ENCODE measurements at regions of chr18 and their contacts with region 1.

Region 1: DNA sequence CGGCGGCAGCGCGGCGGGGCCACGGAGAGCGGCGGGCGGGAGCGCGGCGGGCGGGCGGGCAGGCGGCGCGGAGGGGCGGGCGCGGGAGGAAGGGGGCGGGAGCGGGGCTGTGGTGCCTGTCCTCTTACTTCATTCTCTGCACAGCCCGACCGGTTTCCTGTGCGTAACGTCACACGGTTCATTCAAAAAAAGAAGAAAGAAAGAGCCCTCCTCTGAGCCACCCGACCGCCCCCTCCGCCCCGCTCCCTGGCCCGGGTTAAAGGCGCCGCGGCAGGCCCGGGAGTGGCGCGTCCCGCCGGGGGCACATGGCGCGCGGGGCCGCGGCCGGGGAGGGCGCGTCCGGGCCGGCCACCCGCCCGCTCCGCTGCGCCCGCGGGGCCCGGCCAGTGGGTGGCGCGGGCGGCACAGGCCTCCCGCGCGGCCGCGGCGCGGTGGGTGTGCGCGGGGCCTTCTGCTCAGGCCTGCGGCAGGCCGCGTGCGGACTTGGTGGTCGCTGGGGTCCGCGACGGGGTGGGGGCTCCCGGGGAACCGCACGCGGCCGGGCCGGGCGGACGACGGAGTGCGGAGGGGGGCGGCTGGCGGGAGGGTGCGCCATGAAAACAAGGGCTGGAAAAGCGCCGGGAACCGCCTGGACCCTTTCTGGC is 599 bp upstream of the BCL2 start:
- DNase-seq: peak; percentile 84
- H3K4me3 Mint-ChIP-seq: peak overlapping the region; percentile 80
- H3K27ac Mint-ChIP-seq: peak overlapping the region; percentile 86
- H3K4me1 Mint-ChIP-seq: peaks cover 27% of the 10 kb centered on the region
- H3K27me3 Mint-ChIP-seq: no peaks in the 10 kb centered on the region

Region 2: GRCh38 chr18:62714671-62715435 is 605.3 kb before region 1 on chr18:
- intact Hi-C with region 1: loop called (anchors 10 kb)
- DNase-seq: peak; percentile 90
- H3K4me3 Mint-ChIP-seq: peak overlapping the region; percentile 80
- H3K27ac Mint-ChIP-seq: peak overlapping the region; percentile 76
- H3K4me1 Mint-ChIP-seq: peaks cover 30% of the 10 kb centered on the region
- H3K27me3 Mint-ChIP-seq: peaks cover 12% of the 10 kb centered on the region

Region 3: GRCh38 chr18:63105636-63106316 is 214.4 kb before region 1 on chr18:
- intact Hi-C with region 1: loop called (anchors 2 kb)
- DNase-seq: no peak
- H3K4me3 Mint-ChIP-seq: no peak overlapping the region
- H3K27ac Mint-ChIP-seq: no peak overlapping the region
- H3K4me1 Mint-ChIP-seq: peaks cover 61% of the 10 kb centered on the region
- H3K27me3 Mint-ChIP-seq: peaks cover 5% of the 10 kb centered on the region

Region 4: DNA sequence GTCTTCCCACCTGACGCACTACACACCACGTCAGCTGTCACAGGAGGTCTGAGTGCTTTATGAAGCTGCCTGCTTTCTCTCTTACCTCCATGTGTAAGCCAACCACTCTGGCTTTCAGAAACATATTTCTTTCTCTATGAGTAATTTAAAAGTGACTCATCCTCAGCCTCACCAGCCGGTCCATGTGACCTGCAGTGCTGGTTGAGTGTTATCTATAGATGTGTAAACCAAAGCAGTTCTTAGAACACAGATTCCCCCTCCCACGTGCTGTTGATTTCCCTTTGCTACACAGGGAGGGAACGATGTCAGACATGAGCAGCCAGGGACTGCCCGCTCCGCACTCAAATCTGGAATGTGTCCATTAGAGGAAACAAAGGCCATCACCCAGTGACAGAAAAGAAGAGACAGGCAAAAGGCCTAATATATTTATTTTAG is 158.4 kb before region 1 on chr18:
- intact Hi-C with region 1: loop called (anchors 1 kb)
- DNase-seq: peak; percentile 80
- H3K4me3 Mint-ChIP-seq: peak overlapping the region; percentile 71
- H3K27ac Mint-ChIP-seq: peak overlapping the region; percentile 99
- H3K4me1 Mint-ChIP-seq: peaks cover 86% of the 10 kb centered on the region
- H3K27me3 Mint-ChIP-seq: no peaks in the 10 kb centered on the region

Region 5: GRCh38 chr18:63253428-63254372 is 66.5 kb before region 1 on chr18:
- intact Hi-C with region 1: no loop called
- DNase-seq: no peak
- H3K4me3 Mint-ChIP-seq: peak overlapping the region; percentile 5
- H3K27ac Mint-ChIP-seq: peak overlapping the region; percentile 52
- H3K4me1 Mint-ChIP-seq: peaks cover 60% of the 10 kb centered on the region
- H3K27me3 Mint-ChIP-seq: no peaks in the 10 kb centered on the region

Region 6: GRCh38 chr18:63267975-63268721 is 52.0 kb before region 1 on chr18:
- intact Hi-C with region 1: loop called (anchors 5 kb)
- DNase-seq: no peak
- H3K4me3 Mint-ChIP-seq: peak overlapping the region; percentile 60
- H3K27ac Mint-ChIP-seq: peak overlapping the region; percentile 83
- H3K4me1 Mint-ChIP-seq: peaks cover 57% of the 10 kb centered on the region
- H3K27me3 Mint-ChIP-seq: no peaks in the 10 kb centered on the region

Region 7: GRCh38 chr18:63422087-63422809 is 102.1 kb after region 1 on chr18 and contains the start of gene VPS4B:
- intact Hi-C with region 1: loop called (anchors 5 kb)
- DNase-seq: peak; percentile 100
- H3K4me3 Mint-ChIP-seq: peak within 1 kb of the TSS; percentile 89
- H3K27ac Mint-ChIP-seq: peak within 1 kb of the TSS; percentile 92
- H3K4me1 Mint-ChIP-seq: peaks cover 26% of the 10 kb centered on the region
- H3K27me3 Mint-ChIP-seq: peaks cover 2% of the 10 kb centered on the region
- total RNA-seq, gene VPS4B: 53.8 and 56.1 TPM in 2 replicates

Region 8: DNA sequence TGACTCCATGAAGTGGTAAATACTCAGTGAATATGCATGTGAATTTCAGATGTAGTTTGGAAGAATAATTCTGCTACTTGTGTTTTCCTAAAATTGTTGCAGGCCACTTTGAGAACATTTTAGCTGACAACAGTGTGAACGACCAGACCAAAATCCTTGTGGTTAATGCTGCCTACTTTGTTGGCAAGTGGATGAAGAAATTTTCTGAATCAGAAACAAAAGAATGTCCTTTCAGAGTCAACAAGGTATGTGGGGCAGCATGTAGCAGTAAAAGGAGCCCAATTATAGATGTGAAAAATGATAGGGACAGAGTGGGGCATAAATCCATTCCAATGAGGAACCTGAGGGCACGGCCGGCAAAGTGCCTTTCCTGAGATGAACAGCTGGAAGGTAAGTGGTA is 172.7 kb after region 1 on chr18:
- intact Hi-C with region 1: no loop called
- DNase-seq: no peak
- H3K4me3 Mint-ChIP-seq: no peak overlapping the region
- H3K27ac Mint-ChIP-seq: no peak overlapping the region
- H3K4me1 Mint-ChIP-seq: no peaks in the 10 kb centered on the region
- H3K27me3 Mint-ChIP-seq: peaks cover 22% of the 10 kb centered on the region

Measured in activated T-helper 2 cell treated with anti-CD3 and anti-CD28 coated beads, Interferon-gamma antibody, Interleukin-2, Interleukin-4, amounts not matched to agents 10 μg/mL and 5 μg/mL and 100 μg/mL, durations not matched to agents 14 hours and 24 hours and 36 hours (primary cell).